HepG2 (cell line): ENCODE measurements at regions of chr16 and their contacts with region 1.

Region 1: DNA sequence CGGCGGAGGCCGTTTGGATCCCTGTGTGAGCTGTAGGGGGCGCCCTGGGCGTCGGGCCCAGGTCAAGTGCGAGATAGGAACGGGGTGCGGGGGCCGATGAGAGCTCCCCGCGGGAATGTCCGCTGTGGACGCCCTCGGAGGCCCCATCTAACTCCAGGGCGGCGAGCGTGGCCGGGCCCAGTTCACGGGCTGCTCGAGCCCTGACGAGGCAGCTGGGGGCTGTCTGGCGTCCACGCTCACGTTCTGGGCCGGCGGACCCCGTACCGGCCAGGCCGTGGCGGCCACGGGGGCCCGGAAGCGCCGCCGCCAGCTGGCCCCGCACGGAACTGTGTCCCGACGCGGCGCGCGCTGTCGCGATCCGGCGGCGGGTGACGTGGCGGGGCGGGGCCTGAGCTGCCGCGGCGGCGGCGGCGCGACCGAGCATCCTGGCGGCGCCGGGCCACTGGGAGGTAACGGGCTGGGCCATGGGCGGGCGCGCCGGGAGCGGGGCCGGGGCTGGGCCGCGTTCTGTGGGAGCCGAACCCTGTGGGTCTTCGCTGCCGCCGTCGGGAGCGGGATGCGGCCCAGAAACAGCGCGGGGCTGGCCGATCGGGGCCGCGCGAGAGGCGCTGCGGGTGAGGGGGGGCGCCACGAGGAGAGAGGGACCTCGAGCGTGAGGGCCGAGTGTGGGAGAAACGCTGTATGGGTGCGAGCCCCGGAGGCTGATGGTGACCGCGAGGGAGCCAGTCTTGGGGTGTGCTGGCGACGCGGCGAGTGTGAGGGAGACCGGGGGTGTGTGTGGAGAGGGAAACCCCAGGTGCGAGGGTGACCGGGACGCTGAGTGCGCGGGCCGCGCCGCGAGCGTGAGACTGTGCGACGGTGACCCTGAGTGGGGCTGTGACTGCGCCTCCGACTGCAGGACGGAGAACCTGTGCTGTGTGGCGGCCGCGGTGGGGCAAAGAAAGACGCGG is at the start of gene SLC7A6:
- DNase-seq: peak; percentile 60
- ATAC-seq: peak; percentile 60
- H3K4me3 ChIP-seq: peak within 1 kb of the TSS; percentile 69 to 100 (median 97)
- H3K27ac ChIP-seq: peak within 1 kb of the TSS; percentile 97
- H3K4me1 ChIP-seq: peaks cover 60% of the 10 kb centered on the region
- H3K27me3 ChIP-seq: no peaks in the 10 kb centered on the region; a peak in 1 of 5 replicates
- CTCF ChIP-seq: peak; percentile 95
- EP300 ChIP-seq: 0 out of 4 replicates have a peak, but pooled peaks of 1 of the 2 experiments have one; percentile 39
- POLR2A ChIP-seq: no peak; a peak in 1 of 4 replicates
- RAD21 ChIP-seq: peak; percentile 86
- total RNA-seq, gene SLC7A6: 25.4 and 35.8 TPM in 2 replicates

Region 2: GRCh38 chr16:68190736-68191510 is 73.5 kb before region 1 on chr16:
- CTCF ChIA-PET with region 1: no interaction called
- POLR2A ChIA-PET with region 1: no interaction called
- in situ Hi-C with region 1: no loop called
- intact Hi-C with region 1: no loop called
- DNase-seq: peak; percentile 32
- ATAC-seq: peak; percentile 47
- H3K4me3 ChIP-seq: no peak overlapping the region
- H3K27ac ChIP-seq: no peak overlapping the region
- H3K4me1 ChIP-seq: peaks cover 11% of the 10 kb centered on the region
- H3K27me3 ChIP-seq: no peaks in the 10 kb centered on the region
- CTCF ChIP-seq: no peak
- EP300 ChIP-seq: no peak
- POLR2A ChIP-seq: no peak
- RAD21 ChIP-seq: no peak

Region 3: GRCh38 chr16:68237243-68238028 is 27.0 kb before region 1 on chr16:
- CTCF ChIA-PET with region 1: interaction called, 3 read pairs
- POLR2A ChIA-PET with region 1: interaction called, 51 read pairs
- in situ Hi-C with region 1: no loop called
- intact Hi-C with region 1: loop called (anchors 2 kb)
- DNase-seq: peak; percentile 98
- ATAC-seq: peak; percentile 71
- H3K4me3 ChIP-seq: peak overlapping the region; percentile 66 to 94 (median 93)
- H3K27ac ChIP-seq: peak overlapping the region; percentile 85
- H3K4me1 ChIP-seq: peaks cover 38% of the 10 kb centered on the region
- H3K27me3 ChIP-seq: no peaks in the 10 kb centered on the region; a peak in 1 of 5 replicates
- CTCF ChIP-seq: peak; percentile 10; the same call in 1 of the 2 replicates
- EP300 ChIP-seq: peak; percentile 77 to 92
- POLR2A ChIP-seq: peak in 1 of 2 experiments; percentile 91; a peak in 2 of 4 replicates
- RAD21 ChIP-seq: peak; percentile 28; the same call in 1 of the 2 replicates

Region 4: DNA sequence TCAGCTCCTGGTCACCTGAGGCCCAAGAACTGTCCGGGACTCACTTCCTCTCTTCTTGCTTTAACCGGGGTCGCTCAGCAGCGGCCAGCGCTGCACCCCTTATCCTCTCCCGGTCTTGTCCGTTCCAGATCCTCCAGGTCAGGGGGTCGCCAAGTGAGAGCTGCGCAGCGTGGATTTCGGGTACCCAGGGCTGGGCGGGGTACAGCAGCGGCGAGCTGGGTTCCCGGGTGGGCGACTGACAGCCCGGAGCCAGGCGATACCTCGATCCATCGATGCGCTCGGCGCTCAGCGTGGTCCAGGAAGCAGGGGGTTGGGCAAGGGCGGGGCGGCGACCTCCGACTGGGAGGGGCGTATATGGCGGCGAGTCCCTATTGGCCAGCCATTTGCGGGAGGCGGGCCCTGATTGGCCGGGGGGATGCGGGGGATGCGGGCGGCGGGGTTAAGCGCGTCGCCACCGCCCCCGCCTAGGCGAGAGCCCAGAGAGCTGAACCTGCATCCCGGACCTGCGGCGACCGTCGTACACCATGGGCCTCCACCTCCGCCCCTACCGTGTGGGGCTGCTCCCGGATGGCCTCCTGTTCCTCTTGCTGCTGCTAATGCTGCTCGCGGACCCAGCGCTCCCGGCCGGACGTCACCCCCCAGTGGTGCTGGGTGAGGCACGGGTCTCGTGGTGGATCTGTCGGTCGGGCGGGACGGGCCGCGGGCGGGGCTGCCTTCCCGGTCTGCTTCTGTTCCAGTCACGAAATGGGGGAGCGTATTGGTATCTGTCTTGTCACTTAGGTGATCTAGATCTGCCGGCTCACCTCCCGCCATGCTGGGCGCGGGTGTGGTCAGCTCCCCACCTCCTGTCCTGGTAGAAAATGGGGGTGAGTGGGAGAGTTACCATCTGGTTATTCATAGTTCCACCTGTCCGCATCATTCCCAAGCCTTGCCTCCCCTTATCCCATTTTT is 19.2 kb before region 1 on chr16 and contains the start of gene PLA2G15:
- CTCF ChIA-PET with region 1: no interaction called
- POLR2A ChIA-PET with region 1: interaction called, 11 read pairs
- in situ Hi-C with region 1: no loop called
- intact Hi-C with region 1: no loop called
- DNase-seq: peak; percentile 87
- ATAC-seq: peak; percentile 90
- H3K4me3 ChIP-seq: peak within 1 kb of the TSS; percentile 85 to 97 (median 89)
- H3K27ac ChIP-seq: no peak within 1 kb of the TSS
- H3K4me1 ChIP-seq: peaks cover 59% of the 10 kb centered on the region
- H3K27me3 ChIP-seq: no peaks in the 10 kb centered on the region; a peak in 1 of 5 replicates
- CTCF ChIP-seq: peak; percentile 17; the same call in 1 of the 2 replicates
- EP300 ChIP-seq: 0 out of 4 replicates have a peak, but pooled peaks of 1 of the 2 experiments have one; percentile 23
- POLR2A ChIP-seq: peak in 1 of 2 experiments; percentile 59; a peak in 1 of 4 replicates
- RAD21 ChIP-seq: 0 out of 2 replicates have a peak, but pooled peaks have one; percentile 12
- total RNA-seq, gene PLA2G15: 9.9 and 14.4 TPM in 2 replicates

Region 5: GRCh38 chr16:68275611-68276191 is 11.3 kb after region 1 on chr16:
- CTCF ChIA-PET with region 1: interaction called, 4 read pairs
- POLR2A ChIA-PET with region 1: interaction called, 59 read pairs
- in situ Hi-C with region 1: no loop called
- intact Hi-C with region 1: no loop called
- DNase-seq: peak; percentile 35
- ATAC-seq: peak; percentile 24; the same call in 1 of the 3 replicates
- H3K4me3 ChIP-seq: no peak overlapping the region
- H3K27ac ChIP-seq: peak overlapping the region; percentile 52
- H3K4me1 ChIP-seq: peaks cover 67% of the 10 kb centered on the region
- H3K27me3 ChIP-seq: no peaks in the 10 kb centered on the region
- CTCF ChIP-seq: no peak
- EP300 ChIP-seq: no peak
- POLR2A ChIP-seq: no peak
- RAD21 ChIP-seq: no peak

Region 6: DNA sequence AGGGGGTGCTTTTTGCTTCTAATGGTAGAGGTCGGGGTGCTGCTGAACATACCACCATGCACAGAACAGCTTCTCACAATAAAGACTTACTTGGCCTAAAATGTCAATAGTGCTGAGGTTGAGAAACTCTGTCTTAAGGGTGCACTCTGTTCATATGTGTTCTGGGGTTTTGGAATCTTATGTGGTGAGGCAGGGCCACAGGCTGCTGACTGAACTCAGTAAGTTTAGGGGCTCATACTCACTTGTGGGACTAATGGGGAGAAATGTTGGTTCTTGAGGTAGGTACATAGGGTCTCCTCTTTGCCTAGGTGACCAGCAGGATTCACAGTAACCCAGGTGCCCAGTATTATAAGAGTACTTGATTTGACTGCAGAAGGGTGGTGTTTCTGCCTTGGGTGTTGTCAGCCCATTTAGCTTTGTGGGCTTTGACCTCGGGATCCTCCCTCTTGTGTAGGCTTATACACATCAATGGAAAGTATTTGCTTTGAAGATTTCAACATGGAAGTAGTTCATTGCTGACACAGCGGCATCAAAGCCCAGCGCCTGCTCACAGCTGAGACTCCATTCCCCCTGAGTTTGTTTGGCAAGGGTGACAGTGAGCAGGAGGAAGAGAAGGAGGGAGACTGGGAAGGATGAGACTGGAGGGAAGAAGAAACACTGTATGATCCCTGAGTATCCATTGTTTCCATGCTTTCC is 17.1 kb after region 1 on chr16:
- CTCF ChIA-PET with region 1: interaction called, 4 read pairs
- POLR2A ChIA-PET with region 1: interaction called, 59 read pairs
- in situ Hi-C with region 1: no loop called
- intact Hi-C with region 1: loop called (anchors 1 kb)
- DNase-seq: peak; percentile 97
- ATAC-seq: peak; percentile 97
- H3K4me3 ChIP-seq: peak overlapping the region in 1 of 3 experiments; percentile 26; a peak in 1 of 6 replicates
- H3K27ac ChIP-seq: peak overlapping the region; percentile 81
- H3K4me1 ChIP-seq: peaks cover 78% of the 10 kb centered on the region
- H3K27me3 ChIP-seq: no peaks in the 10 kb centered on the region
- CTCF ChIP-seq: no peak; the same call in 1 of the 2 replicates
- EP300 ChIP-seq: peak; percentile 81 to 97; a peak in 3 of 4 replicates
- POLR2A ChIP-seq: peak in 1 of 2 experiments; percentile 44; a peak in 1 of 4 replicates
- RAD21 ChIP-seq: peak; percentile 51

Region 7: GRCh38 chr16:68298907-68299561 is 34.6 kb after region 1 on chr16:
- CTCF ChIA-PET with region 1: interaction called, 3 read pairs
- POLR2A ChIA-PET with region 1: interaction called, 22 read pairs
- in situ Hi-C with region 1: no loop called
- intact Hi-C with region 1: loop called (anchors 2 kb)
- DNase-seq: peak; percentile 77
- ATAC-seq: peak; percentile 51
- H3K4me3 ChIP-seq: no peak overlapping the region
- H3K27ac ChIP-seq: peak overlapping the region; percentile 28
- H3K4me1 ChIP-seq: peaks cover 37% of the 10 kb centered on the region
- H3K27me3 ChIP-seq: no peaks in the 10 kb centered on the region
- CTCF ChIP-seq: 0 out of 2 replicates have a peak, but pooled peaks have one; percentile 11
- EP300 ChIP-seq: no peak
- POLR2A ChIP-seq: peak; percentile 36 to 50; a peak in 1 of 4 replicates
- RAD21 ChIP-seq: no peak

Region 8: DNA sequence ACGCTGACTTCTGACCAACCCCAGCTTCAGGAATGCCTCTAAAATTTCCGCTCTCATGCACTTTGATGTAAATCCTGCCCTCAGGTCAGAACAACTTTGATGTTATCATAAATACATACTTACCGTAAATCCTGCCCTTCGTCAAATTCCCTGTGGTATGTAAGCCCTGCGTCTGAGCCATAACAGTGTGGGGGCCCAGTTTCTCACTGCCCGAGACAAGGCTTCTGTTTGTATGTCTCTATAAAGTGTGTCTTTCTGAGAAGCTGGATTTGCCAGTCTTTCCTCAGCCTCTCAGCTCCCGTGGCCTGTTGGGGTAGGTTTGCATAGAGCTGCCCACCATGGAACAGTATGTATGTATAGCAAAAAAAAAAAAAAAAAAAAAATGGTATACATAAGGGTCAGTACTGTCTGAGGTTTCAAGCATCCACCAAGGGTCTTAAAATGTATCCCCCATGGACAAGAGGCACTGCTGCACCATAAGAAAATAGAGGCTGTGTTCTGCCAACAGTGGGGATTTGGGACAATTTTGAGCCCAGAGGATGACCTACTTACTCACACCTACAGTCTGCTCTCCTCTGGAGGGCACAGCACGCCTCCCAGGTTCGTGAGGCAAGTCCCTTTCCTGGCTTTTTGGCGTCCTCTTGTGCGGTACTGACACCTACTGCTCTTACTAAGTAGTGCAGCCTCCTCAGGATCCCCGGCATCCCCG is 63.9 kb after region 1 on chr16:
- CTCF ChIA-PET with region 1: interaction called, 96 read pairs
- POLR2A ChIA-PET with region 1: interaction called, 24 read pairs
- in situ Hi-C with region 1: loop called (anchors 5 kb)
- intact Hi-C with region 1: loop called (anchors 1 kb)
- DNase-seq: peak; percentile 88
- ATAC-seq: peak; percentile 86
- H3K4me3 ChIP-seq: no peak overlapping the region; a peak in 1 of 6 replicates
- H3K27ac ChIP-seq: peak overlapping the region; percentile 50
- H3K4me1 ChIP-seq: peaks cover 54% of the 10 kb centered on the region
- H3K27me3 ChIP-seq: no peaks in the 10 kb centered on the region
- CTCF ChIP-seq: peak; percentile 96
- EP300 ChIP-seq: peak in 1 of 2 experiments; percentile 82; a peak in 2 of 4 replicates
- POLR2A ChIP-seq: no peak
- RAD21 ChIP-seq: peak; percentile 96

Region 9: DNA sequence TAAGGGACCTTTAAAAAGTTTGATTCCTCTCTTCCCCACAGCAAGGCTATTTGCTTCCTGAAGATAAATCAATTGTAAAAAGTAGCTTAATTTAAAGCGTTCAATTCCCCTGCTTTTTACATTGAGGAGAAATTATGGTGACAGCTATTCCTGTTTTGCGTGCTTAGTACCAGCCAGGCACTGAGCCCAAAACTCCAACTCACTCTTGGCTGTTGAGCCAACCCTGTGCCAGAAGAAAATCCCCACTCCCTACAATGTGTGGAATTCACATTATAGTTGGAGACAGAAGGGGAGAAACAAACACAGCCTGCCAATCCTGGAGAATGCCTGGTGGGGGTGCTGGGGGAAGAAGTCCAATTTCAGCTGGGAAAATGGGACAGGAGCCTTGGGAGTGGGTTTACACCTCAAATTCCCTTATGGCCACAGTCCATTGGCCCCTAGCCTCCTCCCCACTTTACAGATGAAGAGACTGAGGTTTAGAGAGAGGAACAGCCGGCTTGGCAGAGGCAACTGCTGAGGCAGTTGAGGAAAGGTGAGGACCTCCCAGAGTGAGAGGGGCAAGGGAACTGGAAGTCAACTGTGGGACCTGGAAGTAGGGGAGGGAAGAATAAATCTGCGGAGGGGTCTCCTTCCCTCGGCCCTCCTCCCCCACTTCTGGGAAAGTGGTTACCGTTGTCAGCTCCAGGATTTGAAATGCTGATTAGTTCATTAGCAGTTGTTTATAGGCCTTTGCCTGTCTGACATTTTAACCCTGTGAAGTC is 498.8 kb after region 1 on chr16:
- CTCF ChIA-PET with region 1: no interaction called
- POLR2A ChIA-PET with region 1: no interaction called
- in situ Hi-C with region 1: no loop called
- intact Hi-C with region 1: no loop called
- DNase-seq: no peak
- ATAC-seq: no peak
- H3K4me3 ChIP-seq: no peak overlapping the region
- H3K27ac ChIP-seq: no peak overlapping the region
- H3K4me1 ChIP-seq: peaks cover 18% of the 10 kb centered on the region
- H3K27me3 ChIP-seq: no peaks in the 10 kb centered on the region
- CTCF ChIP-seq: no peak
- EP300 ChIP-seq: no peak
- POLR2A ChIP-seq: no peak
- RAD21 ChIP-seq: no peak